Heart left ventricle (tissue), 16 donors: ENCODE measurements at regions of chr1 and their contacts with region 1.

Region 1: GRCh38 chr1:160085686-160086455 is 4.5 kb downstream of the KCNJ9 start:
- DNase-seq: peak; percentile 76 to 88 (median 83)
- ATAC-seq: peak; percentile 40 to 86 (median 64)
- H3K4me3 ChIP-seq: peak overlapping the region in 1 of 12 donors; percentile 4
- H3K27ac ChIP-seq: peak overlapping the region in 6 of 12 donors; percentile 36 to 77 (median 64)
- H3K4me1 ChIP-seq: peaks cover 0 to 18% (median 4%) of the 10 kb centered on the region in 12 donors
- H3K27me3 ChIP-seq: peaks cover 0 to 40% (median 26%) of the 10 kb centered on the region in 9 donors
- CTCF ChIP-seq: peak; percentile 75 to 91 (median 86)
- POLR2A ChIP-seq: no peak

Region 2: GRCh38 chr1:160046494-160047110 is 39.3 kb before region 1 on chr1:
- intact Hi-C with region 1: loop called in 4 of 10 experiments (anchors 2 to 5 kb)
- DNase-seq: peak; percentile 43 to 67 (median 51)
- ATAC-seq: peak; percentile 78 to 91 (median 82)
- H3K4me3 ChIP-seq: peak overlapping the region in 4 of 12 donors; percentile 0 to 22 (median 18)
- H3K27ac ChIP-seq: peak overlapping the region in 1 of 12 donors; percentile 12
- H3K4me1 ChIP-seq: peaks cover 0 to 14% (median 8%) of the 10 kb centered on the region in 12 donors
- H3K27me3 ChIP-seq: peaks cover 0 to 14% (median 0%) of the 10 kb centered on the region in 9 donors
- CTCF ChIP-seq: peak; percentile 42 to 70 (median 58)
- POLR2A ChIP-seq: no peak

Region 3: GRCh38 chr1:160061369-160062229 is 24.3 kb before region 1 on chr1:
- intact Hi-C with region 1: loop called in 1 of 10 experiments (anchors 2 kb)
- DNase-seq: no peak
- ATAC-seq: peak in 2 of 4 donors; percentile 20 to 26
- H3K4me3 ChIP-seq: no peak overlapping the region
- H3K27ac ChIP-seq: no peak overlapping the region
- H3K4me1 ChIP-seq: peaks cover 0 to 14% (median 0%) of the 10 kb centered on the region in 12 donors
- H3K27me3 ChIP-seq: peaks cover 0 to 10% (median 0%) of the 10 kb centered on the region in 9 donors
- CTCF ChIP-seq: no peak
- POLR2A ChIP-seq: no peak

Region 4: GRCh38 chr1:160376525-160377131 is 290.8 kb after region 1 on chr1:
- intact Hi-C with region 1: loop called in 6 of 10 experiments (anchors 5 to 10 kb)
- DNase-seq: no peak
- ATAC-seq: peak; percentile 56 to 86 (median 80)
- H3K4me3 ChIP-seq: peak overlapping the region in 1 of 12 donors; percentile 20
- H3K27ac ChIP-seq: peak overlapping the region in 4 of 12 donors; percentile 11 to 42 (median 40)
- H3K4me1 ChIP-seq: peaks cover 0 to 23% (median 10%) of the 10 kb centered on the region in 12 donors
- H3K27me3 ChIP-seq: peaks cover 0 to 3% (median 0%) of the 10 kb centered on the region in 9 donors
- CTCF ChIP-seq: peak; percentile 68 to 95 (median 88)
- POLR2A ChIP-seq: no peak